GM10248 (cell line): ENCODE measurements at regions of chr4 and their contacts with region 1.

Region 1: DNA sequence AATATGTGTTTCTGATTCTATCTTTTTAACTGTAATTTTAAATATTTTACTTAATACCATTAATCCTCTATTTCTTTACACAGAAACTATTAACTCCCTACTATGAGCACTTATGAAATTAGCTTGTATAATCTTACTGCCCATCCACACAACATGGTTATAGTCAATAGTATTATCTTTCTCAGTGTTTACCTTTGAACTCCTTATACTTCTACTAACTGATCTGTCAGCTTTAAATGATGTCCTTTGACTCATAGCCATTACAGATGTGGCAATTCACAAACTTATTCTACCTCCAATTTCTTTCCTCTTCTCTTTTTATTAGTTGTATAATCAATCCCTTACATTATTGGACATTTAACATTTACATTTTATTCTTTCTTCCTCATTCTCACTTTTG is 5.5 kb downstream of the SEC31A start:
- DNase-seq: no peak
- CTCF ChIP-seq: no peak

Region 2: GRCh38 chr4:82900331-82901128 is 15.1 kb after region 1 on chr4 and contains the start of gene THAP9:
- CTCF ChIA-PET with region 1: interaction called, 5 read pairs
- POLR2A ChIA-PET with region 1: interaction called, 10 read pairs
- DNase-seq: peak; percentile 92
- CTCF ChIP-seq: no peak